ENCODE measurements at regions of chr9 and their contacts with region 1.

Region 1: GRCh38 chr9:83980395-83981125 is at the start of gene RMI1:
- DNase-seq: peak; percentile 96
- H3K4me3 Mint-ChIP-seq: peak within 1 kb of the TSS; percentile 100
- H3K27ac Mint-ChIP-seq: peak within 1 kb of the TSS; percentile 99
- H3K4me1 Mint-ChIP-seq: peaks cover 43% of the 10 kb centered on the region
- H3K27me3 Mint-ChIP-seq: no peaks in the 10 kb centered on the region
- total RNA-seq, gene RMI1: 26.1 and 27.3 TPM in 2 replicates

Region 2: GRCh38 chr9:83622939-83623678 is 357.5 kb before region 1 on chr9 and contains the start of gene IDNK:
- intact Hi-C with region 1: loop called (anchors 1 kb)
- DNase-seq: peak; percentile 63
- H3K4me3 Mint-ChIP-seq: peak within 1 kb of the TSS; percentile 90
- H3K27ac Mint-ChIP-seq: peak within 1 kb of the TSS; percentile 99
- H3K4me1 Mint-ChIP-seq: peaks cover 22% of the 10 kb centered on the region
- H3K27me3 Mint-ChIP-seq: peaks cover 8% of the 10 kb centered on the region
- total RNA-seq, gene IDNK: 4.9 and 5.1 TPM in 2 replicates

Region 3: DNA sequence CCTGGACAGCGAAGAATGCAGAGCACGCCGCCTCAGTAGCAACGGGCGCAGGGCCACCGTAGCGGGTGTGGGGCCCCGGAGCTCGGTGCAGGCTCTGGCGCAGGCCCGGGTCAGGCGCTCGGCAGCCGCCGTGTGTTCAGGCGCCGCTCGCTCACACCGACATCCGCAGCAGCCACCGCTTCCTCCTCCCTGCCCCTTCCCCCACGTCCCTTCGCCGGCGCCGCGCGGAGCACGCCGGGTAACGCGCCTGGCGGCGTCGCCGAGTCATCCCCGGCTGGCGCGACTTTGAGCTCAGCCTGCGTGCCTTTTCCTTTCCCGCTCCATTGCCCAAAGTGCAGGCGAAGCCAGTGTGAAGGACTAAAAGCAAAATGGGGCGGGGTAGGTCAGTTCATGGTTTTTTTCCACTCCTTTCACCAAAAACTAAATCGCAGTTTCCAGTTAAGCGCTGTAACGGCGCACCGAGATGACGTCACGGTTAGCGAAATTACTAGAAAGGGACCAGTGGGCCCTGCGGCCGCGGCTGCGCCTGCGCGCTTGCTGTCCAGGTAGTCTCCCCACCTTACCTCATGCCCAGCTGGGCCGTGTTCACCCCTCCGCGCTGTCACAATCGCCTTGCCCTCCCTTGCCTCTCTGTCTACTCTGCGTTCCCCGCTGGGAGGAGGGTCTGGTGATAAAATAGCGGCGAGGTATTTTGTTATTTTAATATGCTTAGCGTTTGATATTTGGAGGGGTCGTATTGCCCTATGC is 272.6 kb before region 1 on chr9 and contains the start of gene UBQLN1:
- intact Hi-C with region 1: loop called (anchors 1 kb)
- DNase-seq: peak; percentile 90
- H3K4me3 Mint-ChIP-seq: peak within 1 kb of the TSS; percentile 88
- H3K27ac Mint-ChIP-seq: peak within 1 kb of the TSS; percentile 96
- H3K4me1 Mint-ChIP-seq: peaks cover 27% of the 10 kb centered on the region
- H3K27me3 Mint-ChIP-seq: no peaks in the 10 kb centered on the region
- total RNA-seq, gene UBQLN1: 138 and 140 TPM in 2 replicates

Region 4: GRCh38 chr9:83956434-83957247 is 23.9 kb before region 1 on chr9:
- intact Hi-C with region 1: loop called (anchors 1 kb)
- DNase-seq: peak; percentile 65
- H3K4me3 Mint-ChIP-seq: peak overlapping the region; percentile 99
- H3K27ac Mint-ChIP-seq: peak overlapping the region; percentile 98
- H3K4me1 Mint-ChIP-seq: peaks cover 10% of the 10 kb centered on the region
- H3K27me3 Mint-ChIP-seq: no peaks in the 10 kb centered on the region

Region 5: GRCh38 chr9:84002344-84002743 is 21.8 kb after region 1 on chr9:
- intact Hi-C with region 1: loop called (anchors 1 kb)
- DNase-seq: no peak
- H3K4me3 Mint-ChIP-seq: no peak overlapping the region
- H3K27ac Mint-ChIP-seq: peak overlapping the region; percentile 12
- H3K4me1 Mint-ChIP-seq: peaks cover 17% of the 10 kb centered on the region
- H3K27me3 Mint-ChIP-seq: no peaks in the 10 kb centered on the region

Region 6: GRCh38 chr9:84079994-84080393 is 99.4 kb after region 1 on chr9:
- intact Hi-C with region 1: no loop called
- DNase-seq: no peak
- H3K4me3 Mint-ChIP-seq: no peak overlapping the region
- H3K27ac Mint-ChIP-seq: no peak overlapping the region
- H3K4me1 Mint-ChIP-seq: no peaks in the 10 kb centered on the region
- H3K27me3 Mint-ChIP-seq: peaks cover 6% of the 10 kb centered on the region

Region 7: GRCh38 chr9:84296146-84296843 is 315.7 kb after region 1 on chr9:
- intact Hi-C with region 1: loop called (anchors 5 kb)
- DNase-seq: peak; percentile 23
- H3K4me3 Mint-ChIP-seq: peak overlapping the region; percentile 44
- H3K27ac Mint-ChIP-seq: peak overlapping the region; percentile 98
- H3K4me1 Mint-ChIP-seq: peaks cover 48% of the 10 kb centered on the region
- H3K27me3 Mint-ChIP-seq: no peaks in the 10 kb centered on the region

Region 8: DNA sequence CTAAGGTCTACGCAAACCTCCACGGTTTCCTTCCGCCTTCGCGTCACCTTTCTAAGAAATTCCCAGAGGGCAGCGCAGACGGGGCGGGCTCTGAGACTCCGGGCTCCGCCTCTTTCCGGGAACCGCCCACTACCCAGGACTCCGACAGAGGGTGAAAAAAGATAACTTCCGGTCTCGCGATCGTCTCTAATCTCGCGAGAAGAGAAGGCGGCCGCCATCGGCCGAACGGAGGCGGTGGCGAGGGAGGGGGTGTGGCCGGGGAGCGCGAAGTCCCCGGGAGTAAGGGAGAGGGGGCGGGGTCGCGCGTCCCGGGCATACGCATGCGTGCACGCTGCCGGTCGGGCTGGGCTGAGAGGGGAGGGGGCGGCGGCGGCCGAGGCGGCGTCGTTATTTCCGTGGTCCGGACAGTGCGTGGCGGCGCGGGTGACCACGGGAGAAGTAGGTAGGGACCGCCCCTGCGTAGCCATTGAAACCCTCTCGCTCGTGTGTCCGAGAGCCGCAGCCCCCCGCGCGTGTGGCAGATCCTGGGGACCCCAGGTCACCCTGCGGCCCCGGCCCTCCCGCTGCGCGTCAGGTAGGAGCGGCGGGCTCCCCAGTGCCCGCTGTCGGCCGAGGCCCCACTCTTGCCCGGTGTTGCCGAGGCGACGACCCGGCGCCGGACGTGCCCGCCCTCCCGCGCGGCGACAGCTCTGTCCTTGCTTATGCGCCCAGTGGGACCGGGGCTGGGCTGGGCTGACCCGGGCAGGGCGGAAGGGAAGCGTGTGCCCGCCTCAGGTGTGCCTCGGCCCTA is 1960.5 kb after region 1 on chr9 and contains the start of gene NAA35:
- intact Hi-C with region 1: loop called (anchors 5 kb)
- DNase-seq: peak; percentile 99
- H3K4me3 Mint-ChIP-seq: no peak within 1 kb of the TSS
- H3K27ac Mint-ChIP-seq: peak within 1 kb of the TSS; percentile 93
- H3K4me1 Mint-ChIP-seq: peaks cover 7% of the 10 kb centered on the region
- H3K27me3 Mint-ChIP-seq: no peaks in the 10 kb centered on the region
- total RNA-seq, gene NAA35: 31.3 and 33.6 TPM in 2 replicates

Measured in activated T-helper 2 cell treated with anti-CD3 and anti-CD28 coated beads, Interferon-gamma antibody, Interleukin-2, Interleukin-4, amounts not matched to agents 10 μg/mL and 5 μg/mL and 100 μg/mL, durations not matched to agents 14 hours and 24 hours and 36 hours (primary cell).